Calu3 (cell line): ENCODE measurements at regions of chr2 and their contacts with region 1.

Region 1: GRCh38 chr2:176096986-176097819 is 2.4 kb upstream of the HOXD12 start:
- DNase-seq: peak; percentile 86
- H3K4me3 Mint-ChIP-seq: peak overlapping the region; percentile 85
- H3K27ac Mint-ChIP-seq: peak overlapping the region; percentile 80
- H3K4me1 Mint-ChIP-seq: peaks cover 9% of the 10 kb centered on the region
- H3K27me3 Mint-ChIP-seq: peaks cover 8% of the 10 kb centered on the region
- CTCF ChIP-seq: peak; percentile 95

Region 2: GRCh38 chr2:175251425-175252041 is 845.7 kb before region 1 on chr2:
- CTCF ChIA-PET with region 1: interaction called, 24 read pairs
- intact Hi-C with region 1: loop called (anchors 5 kb)
- DNase-seq: peak; percentile 33
- H3K4me3 Mint-ChIP-seq: no peak overlapping the region
- H3K27ac Mint-ChIP-seq: no peak overlapping the region
- H3K4me1 Mint-ChIP-seq: no peaks in the 10 kb centered on the region
- H3K27me3 Mint-ChIP-seq: peaks cover 12% of the 10 kb centered on the region
- CTCF ChIP-seq: peak; percentile 67

Region 3: GRCh38 chr2:175366815-175367214 is 730.4 kb before region 1 on chr2:
- CTCF ChIA-PET with region 1: interaction called, 3 read pairs
- intact Hi-C with region 1: loop called (anchors 2 kb)
- DNase-seq: peak; percentile 62
- H3K4me3 Mint-ChIP-seq: no peak overlapping the region
- H3K27ac Mint-ChIP-seq: no peak overlapping the region
- H3K4me1 Mint-ChIP-seq: peaks cover 9% of the 10 kb centered on the region
- H3K27me3 Mint-ChIP-seq: no peaks in the 10 kb centered on the region
- CTCF ChIP-seq: peak; percentile 82

Region 4: DNA sequence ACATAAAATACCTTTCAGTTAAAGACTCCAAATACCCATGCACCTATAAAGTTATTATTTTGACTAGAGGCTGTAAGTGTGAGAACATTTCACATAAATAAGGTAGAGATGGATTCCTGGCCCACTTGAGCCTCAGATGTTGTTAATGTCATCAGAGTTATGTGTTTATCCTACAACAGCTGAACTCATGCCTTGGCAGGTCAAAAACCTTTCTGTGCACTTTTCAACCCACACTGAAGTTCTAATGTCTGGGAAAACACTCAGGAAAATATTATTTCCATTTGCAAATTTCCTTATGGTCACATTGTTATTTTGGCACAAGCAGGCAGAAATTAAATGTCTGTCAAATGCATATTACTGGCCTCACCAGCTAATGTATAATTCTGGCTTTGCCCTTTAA is 304.3 kb before region 1 on chr2:
- CTCF ChIA-PET with region 1: no interaction called
- intact Hi-C with region 1: no loop called
- DNase-seq: no peak
- H3K4me3 Mint-ChIP-seq: no peak overlapping the region
- H3K27ac Mint-ChIP-seq: no peak overlapping the region
- H3K4me1 Mint-ChIP-seq: no peaks in the 10 kb centered on the region
- H3K27me3 Mint-ChIP-seq: no peaks in the 10 kb centered on the region
- CTCF ChIP-seq: no peak

Region 5: DNA sequence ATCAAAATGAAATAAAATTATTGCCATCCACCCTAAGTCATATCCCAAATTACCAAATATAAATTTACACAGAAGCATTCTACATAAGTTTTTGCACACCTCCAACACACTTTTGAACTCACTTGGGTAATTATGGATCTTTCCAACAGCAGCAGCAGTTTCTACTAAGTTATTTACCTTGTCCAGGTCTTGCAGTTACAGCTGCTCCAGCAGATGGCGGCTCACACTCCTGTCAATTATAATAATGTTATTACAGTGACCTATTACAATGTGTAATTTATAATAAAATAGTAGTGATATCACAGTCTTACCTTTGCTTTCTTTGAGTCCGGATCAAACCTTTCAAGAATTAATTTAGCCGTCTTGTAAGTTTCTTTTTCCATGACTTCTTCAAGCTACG is 133.0 kb before region 1 on chr2:
- CTCF ChIA-PET with region 1: no interaction called
- intact Hi-C with region 1: loop called (anchors 5 kb)
- DNase-seq: peak; percentile 9
- H3K4me3 Mint-ChIP-seq: no peak overlapping the region
- H3K27ac Mint-ChIP-seq: no peak overlapping the region
- H3K4me1 Mint-ChIP-seq: no peaks in the 10 kb centered on the region
- H3K27me3 Mint-ChIP-seq: no peaks in the 10 kb centered on the region
- CTCF ChIP-seq: no peak

Region 6: DNA sequence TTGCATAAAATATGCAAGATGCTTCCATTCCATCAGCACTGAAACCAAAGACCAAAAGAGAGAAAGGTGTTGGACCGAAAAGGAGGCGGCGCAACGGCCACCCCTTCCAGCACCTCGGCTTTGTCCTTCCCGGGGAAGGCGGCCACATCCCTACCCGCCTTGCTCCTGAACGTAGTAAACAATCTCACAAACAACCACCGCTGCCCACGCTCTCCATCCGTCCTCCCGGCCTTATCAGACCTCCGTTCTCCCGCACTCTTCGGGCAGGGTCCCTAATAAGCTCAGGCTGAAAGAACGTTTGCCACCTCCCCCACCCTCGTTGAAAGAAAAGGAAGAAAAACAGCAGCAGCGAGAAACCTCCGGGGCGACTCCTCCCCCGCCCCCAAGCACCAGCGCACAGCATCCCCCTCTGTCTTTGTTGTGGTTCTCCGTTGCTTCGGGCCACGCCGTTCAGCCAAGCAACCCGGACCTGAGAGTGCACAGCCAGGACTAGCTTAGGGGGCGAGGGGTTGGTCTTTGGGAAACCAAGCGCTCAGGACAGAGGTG is 17.8 kb before region 1 on chr2:
- CTCF ChIA-PET with region 1: no interaction called
- intact Hi-C with region 1: no loop called
- DNase-seq: no peak
- H3K4me3 Mint-ChIP-seq: peak overlapping the region; percentile 86
- H3K27ac Mint-ChIP-seq: no peak overlapping the region
- H3K4me1 Mint-ChIP-seq: peaks cover 8% of the 10 kb centered on the region
- H3K27me3 Mint-ChIP-seq: peaks cover 41% of the 10 kb centered on the region
- CTCF ChIP-seq: no peak